Activated CD4-positive, alpha-beta T cell treated with anti-CD3 and anti-CD28 coated beads for 36 hours (primary cell): ENCODE measurements at regions of chr4 and their contacts with region 1.

Region 1: DNA sequence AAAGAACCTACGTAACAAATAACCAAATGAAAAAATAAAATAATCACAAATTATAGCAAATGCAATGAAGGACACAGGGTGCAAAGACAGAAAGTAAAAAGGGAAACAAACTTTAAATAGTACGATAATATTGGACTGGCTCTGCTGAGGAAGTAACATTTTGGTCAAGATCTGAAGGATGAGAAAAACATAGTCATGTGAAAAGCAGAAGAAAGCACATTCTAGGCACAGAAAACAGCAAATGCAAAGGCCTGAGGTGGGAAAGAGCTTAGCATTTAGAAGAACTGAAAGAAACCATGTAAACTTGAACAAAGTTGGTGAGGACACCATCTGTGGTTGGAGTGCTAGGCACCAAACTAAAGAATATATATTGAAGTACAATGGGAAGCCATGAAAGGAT is 111.2 kb downstream of the PPP3CA start:
- DNase-seq: no peak
- ATAC-seq: no peak
- H3K4me3 Mint-ChIP-seq: no peak overlapping the region
- H3K27ac Mint-ChIP-seq: no peak overlapping the region
- H3K4me1 Mint-ChIP-seq: peaks cover 22% of the 10 kb centered on the region
- H3K27me3 Mint-ChIP-seq: no peaks in the 10 kb centered on the region

Region 2: GRCh38 chr4:101283434-101283833 is 47.3 kb after region 1 on chr4:
- CTCF ChIA-PET with region 1: no interaction called
- POLR2A ChIA-PET with region 1: no interaction called
- intact Hi-C with region 1: loop called in 1 of 2 experiments (anchors 1 kb)
- DNase-seq: no peak
- ATAC-seq: no peak
- H3K4me3 Mint-ChIP-seq: no peak overlapping the region
- H3K27ac Mint-ChIP-seq: no peak overlapping the region
- H3K4me1 Mint-ChIP-seq: peaks cover 50% of the 10 kb centered on the region
- H3K27me3 Mint-ChIP-seq: no peaks in the 10 kb centered on the region

Region 3: GRCh38 chr4:101307899-101308298 is 71.8 kb after region 1 on chr4:
- CTCF ChIA-PET with region 1: no interaction called
- POLR2A ChIA-PET with region 1: no interaction called
- intact Hi-C with region 1: no loop called
- DNase-seq: no peak
- ATAC-seq: peak; percentile 51
- H3K4me3 Mint-ChIP-seq: no peak overlapping the region
- H3K27ac Mint-ChIP-seq: no peak overlapping the region
- H3K4me1 Mint-ChIP-seq: peaks cover 24% of the 10 kb centered on the region
- H3K27me3 Mint-ChIP-seq: no peaks in the 10 kb centered on the region